MCF 10A (cell line): ENCODE measurements at regions of chr10 and their contacts with region 1.

Region 1: GRCh38 chr10:74234569-74234968 is 83.5 kb downstream of the ADK start:
- DNase-seq: no peak
- H3K4me3 Mint-ChIP-seq: no peak overlapping the region
- H3K27ac Mint-ChIP-seq: no peak overlapping the region
- H3K4me1 Mint-ChIP-seq: peaks cover 16% of the 10 kb centered on the region
- H3K27me3 Mint-ChIP-seq: no peaks in the 10 kb centered on the region
- CTCF ChIP-seq: peak; percentile 42

Region 2: GRCh38 chr10:74118804-74119203 is 115.8 kb before region 1 on chr10:
- CTCF ChIA-PET with region 1: interaction called, 7 read pairs
- POLR2A ChIA-PET with region 1: interaction called, 3 read pairs
- intact Hi-C with region 1: loop called (anchors 5 kb)
- DNase-seq: peak; percentile 56
- H3K4me3 Mint-ChIP-seq: no peak overlapping the region
- H3K27ac Mint-ChIP-seq: peak overlapping the region; percentile 65
- H3K4me1 Mint-ChIP-seq: peaks cover 13% of the 10 kb centered on the region
- H3K27me3 Mint-ChIP-seq: no peaks in the 10 kb centered on the region
- CTCF ChIP-seq: no peak

Region 3: DNA sequence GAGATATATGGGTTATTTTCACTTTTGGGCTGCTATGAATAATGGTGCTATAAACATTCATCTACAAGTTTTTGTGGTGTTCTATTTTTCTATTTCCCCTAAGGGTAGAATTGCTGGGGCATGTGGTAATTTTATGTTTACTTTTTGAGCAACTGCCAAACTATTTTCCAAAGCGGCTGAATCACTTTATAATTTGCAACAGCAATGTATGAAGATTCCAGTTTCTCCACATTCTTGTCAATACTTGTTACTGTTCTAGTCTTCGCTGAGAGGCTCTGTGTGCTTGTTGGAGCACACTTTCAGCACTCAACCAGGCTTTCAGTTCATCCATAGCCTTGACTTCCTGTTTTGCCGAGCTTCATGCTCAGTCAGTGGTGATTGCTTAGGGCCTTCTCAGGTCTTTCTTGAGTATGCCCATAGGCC is 44.6 kb before region 1 on chr10:
- CTCF ChIA-PET with region 1: interaction called, 10 read pairs
- POLR2A ChIA-PET with region 1: interaction called, 4 read pairs
- intact Hi-C with region 1: no loop called
- DNase-seq: peak; percentile 94
- H3K4me3 Mint-ChIP-seq: peak overlapping the region; percentile 66
- H3K27ac Mint-ChIP-seq: peak overlapping the region; percentile 91
- H3K4me1 Mint-ChIP-seq: peaks cover 43% of the 10 kb centered on the region
- H3K27me3 Mint-ChIP-seq: no peaks in the 10 kb centered on the region
- CTCF ChIP-seq: no peak